ENCODE measurements at regions of chr5 and their contacts with region 1.

Region 1: DNA sequence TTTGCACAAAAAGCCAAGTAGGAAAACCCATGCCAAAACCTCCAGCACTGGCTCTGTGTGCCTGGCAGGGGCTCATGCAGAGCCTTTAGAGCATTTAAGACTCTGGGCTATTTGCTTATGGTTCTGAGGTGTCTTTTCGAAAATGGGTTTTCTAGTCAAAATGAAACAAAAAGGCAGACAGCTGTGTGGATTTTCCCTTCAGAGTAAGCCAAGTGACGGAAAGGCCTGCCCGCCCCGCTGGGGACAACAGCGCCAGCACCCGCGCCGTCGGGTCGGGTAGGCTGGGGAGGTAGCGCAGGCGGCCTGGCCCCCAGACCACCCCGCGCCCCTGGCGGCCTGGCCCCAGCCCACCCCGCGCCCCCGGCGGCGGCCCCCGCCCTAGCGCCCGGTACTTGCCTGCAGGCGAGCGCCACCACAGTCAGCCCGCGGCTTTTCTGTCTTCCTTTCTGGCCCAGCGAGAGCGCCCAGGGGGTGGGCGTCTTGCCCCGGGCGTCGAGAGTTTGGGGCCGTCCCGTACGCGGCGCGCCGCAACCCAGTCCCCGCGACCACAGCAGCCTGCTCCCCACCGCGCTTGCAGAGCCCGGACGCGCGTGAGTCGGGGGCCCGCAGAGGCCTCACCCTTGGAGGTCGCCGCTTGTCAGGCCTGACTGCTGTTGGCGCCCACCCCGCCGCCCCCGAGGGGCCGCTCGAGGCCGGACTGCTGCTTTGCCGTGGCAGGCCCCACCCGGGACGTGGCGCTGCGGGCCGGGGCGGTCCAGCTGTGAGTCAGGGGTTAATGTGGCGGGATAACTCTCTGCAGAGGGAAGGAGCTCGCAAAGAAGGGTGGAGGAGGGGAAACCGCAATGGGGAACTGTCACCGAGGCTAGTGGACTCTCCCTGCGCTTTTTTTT is at the start of gene TICAM2:
- DNase-seq: peak; percentile 67 to 81
- ATAC-seq: peak; percentile 86 to 89 (median 88)
- H3K4me3 ChIP-seq: peak within 1 kb of the TSS; percentile 88
- H3K27ac ChIP-seq: peak within 1 kb of the TSS; percentile 95
- H3K4me1 ChIP-seq: peaks cover 49% of the 10 kb centered on the region
- H3K27me3 ChIP-seq: no peaks in the 10 kb centered on the region
- CTCF ChIP-seq: no peak
- total RNA-seq, gene TICAM2: 1.2 to 4.9 (median 1.7) TPM

Region 2: GRCh38 chr5:115557667-115558387 is 44.1 kb before region 1 on chr5:
- intact Hi-C with region 1: no loop called
- DNase-seq: no peak
- ATAC-seq: peak in 1 of 4 donors; percentile 37
- H3K4me3 ChIP-seq: no peak overlapping the region
- H3K27ac ChIP-seq: no peak overlapping the region
- H3K4me1 ChIP-seq: peaks cover 17% of the 10 kb centered on the region
- H3K27me3 ChIP-seq: peaks cover 0 to 2% (median 0%) of the 10 kb centered on the region in 3 donors
- CTCF ChIP-seq: no peak

Region 3: GRCh38 chr5:115625579-115626444 is 23.9 kb after region 1 on chr5 and contains the start of gene TMED7:
- intact Hi-C with region 1: loop called in 1 of 2 experiments (anchors 2 kb)
- DNase-seq: peak; percentile 100
- ATAC-seq: peak; percentile 99
- H3K4me3 ChIP-seq: peak within 1 kb of the TSS; percentile 87
- H3K27ac ChIP-seq: peak within 1 kb of the TSS; percentile 98
- H3K4me1 ChIP-seq: peaks cover 33% of the 10 kb centered on the region
- H3K27me3 ChIP-seq: no peaks in the 10 kb centered on the region
- CTCF ChIP-seq: peak; percentile 9
- total RNA-seq, gene TMED7: 34.2 to 59.0 (median 40.6) TPM